PC-9 (cell line): ENCODE measurements at regions of chr11 and their contacts with region 1.

Region 1: DNA sequence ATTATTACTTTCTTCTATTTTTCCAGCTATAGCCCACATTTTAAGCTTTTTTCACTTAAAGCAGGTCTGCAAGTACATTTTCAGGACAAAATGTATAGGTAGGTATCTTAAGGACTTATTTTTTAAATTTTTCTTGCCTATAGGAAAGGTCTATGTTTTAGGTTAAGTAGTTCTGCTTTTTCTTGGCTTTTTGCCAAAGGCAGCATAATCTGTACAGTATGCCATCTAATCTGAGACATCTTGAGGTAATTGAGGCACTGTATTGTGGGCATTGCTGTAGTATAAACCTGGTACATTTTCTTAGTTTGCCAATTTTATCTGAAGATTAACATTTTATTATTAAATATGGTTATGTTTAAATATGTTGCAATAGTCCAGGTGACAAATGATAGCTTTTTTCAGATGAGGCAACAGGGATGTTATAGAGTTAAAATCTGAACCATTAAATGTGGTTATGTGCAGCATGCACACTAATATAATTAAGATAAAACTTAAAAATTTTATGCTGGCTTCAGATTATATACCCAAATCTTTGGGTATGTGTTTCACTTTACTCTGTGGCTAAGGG is 42.9 kb downstream of the QSER1 start:
- DNase-seq: no peak
- H3K4me3 ChIP-seq: no peak overlapping the region
- H3K27ac ChIP-seq: no peak overlapping the region
- H3K4me1 ChIP-seq: no peaks in the 10 kb centered on the region
- H3K27me3 ChIP-seq: no peaks in the 10 kb centered on the region
- CTCF ChIP-seq: no peak

Region 2: DNA sequence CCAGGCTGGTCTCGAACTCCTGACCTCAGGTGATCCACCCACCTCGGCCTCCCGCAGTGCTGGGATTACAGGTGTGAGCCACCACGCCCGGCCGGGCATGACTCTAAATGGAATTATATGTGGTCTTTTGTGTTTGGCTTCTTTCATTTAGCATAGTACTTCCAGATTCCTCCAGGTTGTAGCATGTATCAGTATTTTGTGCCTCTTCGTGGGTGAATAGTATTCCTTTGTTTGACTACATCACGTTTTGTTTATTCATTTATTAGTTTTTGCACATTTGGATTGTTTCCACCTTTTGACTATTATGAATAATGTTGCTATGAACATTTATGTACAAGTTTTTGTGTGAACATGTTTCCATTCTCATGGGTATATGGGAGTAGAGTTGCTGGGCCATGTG is 18.6 kb before region 1 on chr11:
- CTCF ChIA-PET with region 1: interaction called, 14 read pairs
- POLR2A ChIA-PET with region 1: interaction called, 3 read pairs
- intact Hi-C with region 1: no loop called
- DNase-seq: no peak
- H3K4me3 ChIP-seq: no peak overlapping the region
- H3K27ac ChIP-seq: no peak overlapping the region
- H3K4me1 ChIP-seq: peaks cover 16% of the 10 kb centered on the region
- H3K27me3 ChIP-seq: no peaks in the 10 kb centered on the region
- CTCF ChIP-seq: no peak

Region 3: DNA sequence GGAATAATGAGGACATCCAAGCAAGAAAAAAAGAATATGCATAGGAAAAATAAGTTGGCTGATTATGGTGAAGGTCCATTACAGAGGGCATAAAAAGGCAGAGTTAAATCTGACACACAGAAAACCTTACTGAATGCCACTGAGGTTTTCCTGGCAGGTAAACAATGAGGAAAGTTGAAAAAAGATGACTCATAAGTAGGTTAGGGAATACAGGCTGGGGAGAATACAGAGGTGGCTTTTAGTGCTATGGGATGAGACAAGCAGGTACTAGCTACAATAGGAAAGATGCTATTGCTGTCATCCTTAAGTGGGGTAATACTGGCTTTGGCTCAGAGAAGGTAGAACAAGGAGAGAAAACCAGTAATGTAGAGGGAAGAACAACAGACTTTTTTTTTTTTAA is 181.0 kb after region 1 on chr11:
- CTCF ChIA-PET with region 1: no interaction called
- POLR2A ChIA-PET with region 1: no interaction called
- intact Hi-C with region 1: no loop called
- DNase-seq: peak in 1 of 2 experiments; percentile 67
- H3K4me3 ChIP-seq: no peak overlapping the region
- H3K27ac ChIP-seq: 0 out of 2 replicates have a peak overlapping the region, but pooled peaks have one; percentile 3
- H3K4me1 ChIP-seq: peaks cover 21% of the 10 kb centered on the region
- H3K27me3 ChIP-seq: no peaks in the 10 kb centered on the region
- CTCF ChIP-seq: no peak

Region 4: DNA sequence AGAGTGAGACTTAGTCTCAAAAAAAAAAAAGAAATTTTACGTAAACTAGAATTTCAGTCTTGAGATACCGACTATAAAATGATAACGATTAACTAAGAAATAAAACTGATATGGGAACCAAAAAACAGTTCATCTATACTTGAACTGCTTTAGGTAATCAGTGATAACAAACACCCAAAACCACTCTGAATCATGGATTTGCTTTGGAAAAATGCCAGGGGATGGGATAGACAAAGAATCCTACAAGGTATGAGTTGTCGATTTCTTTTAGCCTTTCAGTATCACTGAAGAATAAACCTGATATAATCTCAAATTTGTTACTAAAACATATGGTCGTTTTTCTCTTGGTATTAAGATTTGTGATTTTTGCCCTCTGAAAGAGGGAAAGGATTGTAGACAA is 212.0 kb after region 1 on chr11:
- CTCF ChIA-PET with region 1: no interaction called
- POLR2A ChIA-PET with region 1: no interaction called
- intact Hi-C with region 1: no loop called
- DNase-seq: no peak
- H3K4me3 ChIP-seq: no peak overlapping the region
- H3K27ac ChIP-seq: 0 out of 2 replicates have a peak overlapping the region, but pooled peaks have one; percentile 29
- H3K4me1 ChIP-seq: peaks cover 19% of the 10 kb centered on the region
- H3K27me3 ChIP-seq: no peaks in the 10 kb centered on the region
- CTCF ChIP-seq: no peak